GM10248 (cell line): ENCODE measurements at regions of chr10 and their contacts with region 1.

Region 1: GRCh38 chr10:12264204-12264940 is 68.4 kb downstream of the CDC123 start:
- DNase-seq: peak; percentile 94
- CTCF ChIP-seq: peak; percentile 89

Region 2: DNA sequence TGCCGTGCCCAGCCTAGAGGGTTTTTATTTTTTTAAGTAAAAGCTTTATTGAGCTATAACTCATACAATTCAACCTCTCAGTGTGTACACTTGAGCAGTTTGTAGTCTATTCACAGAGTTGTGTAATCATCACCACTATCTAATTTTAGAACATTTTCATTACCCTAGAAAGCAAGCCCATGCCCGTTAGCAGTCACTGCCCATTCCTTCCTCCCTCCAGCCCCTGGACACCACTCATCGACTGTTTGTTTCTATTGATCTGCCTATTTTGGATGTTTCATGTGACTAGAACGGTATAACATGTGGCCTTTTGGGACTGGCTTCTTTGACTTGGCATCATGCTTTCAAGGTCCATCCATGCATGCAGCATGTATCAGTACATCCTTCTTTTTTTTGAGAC is 160.6 kb before region 1 on chr10:
- CTCF ChIA-PET with region 1: no interaction called
- POLR2A ChIA-PET with region 1: no interaction called
- DNase-seq: no peak
- CTCF ChIP-seq: no peak

Region 3: DNA sequence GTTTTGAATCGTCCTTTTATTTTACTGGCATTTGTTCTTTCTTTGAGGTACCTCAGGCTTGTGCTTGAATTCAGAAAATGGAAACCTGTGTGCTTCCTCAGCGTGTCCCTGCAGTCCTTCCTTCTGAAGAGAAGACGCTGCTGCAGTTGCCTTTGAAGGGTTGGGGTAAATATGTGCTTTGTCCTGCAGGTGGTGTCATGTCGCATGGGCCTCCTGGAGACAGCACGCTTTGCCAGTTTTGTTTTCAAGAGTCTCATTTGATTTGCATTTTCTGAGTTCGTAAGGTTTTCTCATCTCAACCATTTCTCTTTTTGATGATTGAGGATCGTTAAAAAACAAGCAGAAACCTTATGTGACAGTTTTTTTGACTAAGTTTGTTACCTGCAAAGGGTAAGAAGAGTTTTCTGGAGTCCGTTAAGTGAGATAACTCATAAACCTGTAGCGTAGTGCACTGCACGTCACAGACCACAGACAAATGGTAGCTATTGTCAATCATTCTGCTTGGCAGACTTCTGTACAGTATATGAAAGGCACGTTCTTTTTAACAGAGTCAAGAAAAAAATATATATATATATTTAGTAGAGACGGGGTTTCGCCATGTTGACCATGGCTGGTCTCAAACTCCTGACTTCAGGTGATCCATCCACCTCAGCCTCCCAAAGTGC is 11.4 kb before region 1 on chr10:
- CTCF ChIA-PET with region 1: interaction called, 32 read pairs
- POLR2A ChIA-PET with region 1: no interaction called
- DNase-seq: peak; percentile 67
- CTCF ChIP-seq: peak; percentile 60

Region 4: DNA sequence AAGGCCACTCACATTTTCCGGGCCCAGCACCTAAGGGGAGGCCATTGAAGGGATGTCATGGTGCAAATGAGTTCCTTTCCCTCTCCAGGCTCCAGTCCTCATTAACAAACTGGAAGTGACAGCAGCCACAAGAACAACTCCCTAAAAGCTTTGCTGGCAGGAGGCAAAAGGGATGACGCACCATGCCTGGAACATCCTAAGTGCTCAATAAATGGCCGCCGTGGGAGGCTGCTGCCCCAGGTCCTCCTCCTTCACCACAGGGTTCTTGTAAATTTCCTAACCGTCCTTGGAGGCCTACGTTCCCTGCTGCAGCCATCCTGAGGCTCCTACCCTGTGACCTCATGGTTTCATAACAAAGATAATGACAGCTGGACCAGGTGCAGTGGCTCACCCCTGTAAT is 43.7 kb after region 1 on chr10:
- CTCF ChIA-PET with region 1: interaction called, 6 read pairs
- POLR2A ChIA-PET with region 1: interaction called, 12 read pairs
- DNase-seq: no peak
- CTCF ChIP-seq: no peak

Region 5: DNA sequence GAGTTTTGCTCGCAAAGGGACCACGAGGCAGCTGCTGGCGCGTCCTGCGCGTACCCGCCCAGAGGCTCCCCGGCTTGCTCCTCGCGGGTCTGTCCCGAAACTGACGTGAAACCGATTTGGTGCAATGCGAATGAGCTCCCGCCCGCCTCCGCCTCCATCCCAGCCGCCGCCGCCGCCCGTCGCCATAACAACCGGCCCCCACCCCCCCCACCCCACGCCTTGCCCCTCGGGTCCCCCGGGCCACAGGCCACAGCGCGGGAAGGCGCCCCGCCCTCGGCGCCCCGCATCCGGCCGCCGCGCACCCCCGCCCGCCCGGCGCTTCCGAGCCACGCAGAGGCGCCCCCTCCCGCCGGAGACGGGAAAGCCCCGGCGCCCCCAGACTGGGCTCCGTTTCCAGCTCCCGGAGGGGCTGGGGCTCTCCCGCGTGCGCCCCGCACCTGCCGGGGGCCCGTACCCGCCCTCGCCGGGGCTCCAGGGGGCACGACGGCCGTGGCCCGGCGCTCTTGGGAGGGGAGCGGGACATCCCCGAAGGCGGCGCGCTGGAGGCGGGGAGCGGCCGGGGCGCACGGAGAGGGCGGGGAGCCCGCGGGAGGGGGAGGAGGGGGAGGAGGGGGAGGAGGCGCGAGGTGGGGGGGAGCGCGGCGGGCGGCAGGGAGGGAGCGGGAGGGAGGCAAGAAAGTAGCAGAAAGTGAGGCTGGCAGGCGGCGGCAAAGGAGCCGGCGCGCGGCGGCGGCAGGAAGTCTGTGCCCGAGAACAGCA is 84.7 kb after region 1 on chr10 and contains the start of gene CAMK1D:
- CTCF ChIA-PET with region 1: interaction called, 17 read pairs
- POLR2A ChIA-PET with region 1: interaction called, 14 read pairs
- DNase-seq: peak; percentile 90
- CTCF ChIP-seq: peak; percentile 26

Region 6: GRCh38 chr10:12656518-12657142 is 392.3 kb after region 1 on chr10:
- CTCF ChIA-PET with region 1: interaction called, 20 read pairs
- POLR2A ChIA-PET with region 1: no interaction called
- DNase-seq: peak; percentile 75
- CTCF ChIP-seq: peak; percentile 57

Region 7: DNA sequence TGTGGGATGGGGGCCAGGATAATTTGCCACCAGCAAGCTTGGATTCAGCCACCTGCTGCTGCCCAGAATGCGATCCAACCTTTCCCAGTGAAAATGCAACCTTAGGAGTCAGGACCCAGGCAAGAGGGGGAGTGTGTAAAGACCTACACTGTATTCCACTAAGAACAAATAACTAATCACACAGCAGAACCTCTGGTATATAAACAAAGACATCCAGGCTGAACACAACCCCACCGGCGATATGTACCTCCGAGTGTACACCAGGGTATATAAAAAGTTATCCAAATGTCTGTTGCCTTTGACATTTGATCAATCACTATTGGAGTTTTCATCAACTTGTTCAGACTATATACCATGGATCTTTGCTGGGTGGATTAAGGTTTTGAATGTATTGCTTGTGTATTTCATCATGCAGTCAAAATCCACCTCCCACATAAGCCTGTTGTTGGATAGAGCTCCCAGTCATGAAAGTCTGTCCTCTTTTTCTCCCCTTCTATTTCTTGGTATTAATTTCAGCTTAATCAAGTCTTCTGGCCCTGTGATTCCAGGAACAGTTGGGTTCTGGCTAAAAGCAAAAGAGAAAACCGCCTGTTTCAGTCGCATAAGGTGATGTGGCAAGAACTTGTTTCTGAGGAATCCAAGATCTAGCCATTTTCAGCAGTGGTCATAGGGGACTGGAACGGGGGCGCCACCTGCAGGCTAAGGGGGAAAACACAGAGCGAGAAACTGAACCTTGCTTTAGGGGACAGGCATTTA is 446.4 kb after region 1 on chr10:
- CTCF ChIA-PET with region 1: interaction called, 15 read pairs
- POLR2A ChIA-PET with region 1: interaction called, 3 read pairs
- DNase-seq: peak; percentile 82
- CTCF ChIP-seq: peak; percentile 95